ENCODE measurements at regions of chr17 and their contacts with region 1.

Region 1: GRCh38 chr17:38485146-38485468 is 56.8 kb downstream of the ARHGAP23 start:
- DNase-seq: no peak
- ATAC-seq: no peak

Region 2: GRCh38 chr17:38444151-38444550 is 41.0 kb before region 1 on chr17:
- intact Hi-C with region 1: loop called (anchors 5 kb)
- DNase-seq: no peak
- ATAC-seq: peak; percentile 91

Region 3: DNA sequence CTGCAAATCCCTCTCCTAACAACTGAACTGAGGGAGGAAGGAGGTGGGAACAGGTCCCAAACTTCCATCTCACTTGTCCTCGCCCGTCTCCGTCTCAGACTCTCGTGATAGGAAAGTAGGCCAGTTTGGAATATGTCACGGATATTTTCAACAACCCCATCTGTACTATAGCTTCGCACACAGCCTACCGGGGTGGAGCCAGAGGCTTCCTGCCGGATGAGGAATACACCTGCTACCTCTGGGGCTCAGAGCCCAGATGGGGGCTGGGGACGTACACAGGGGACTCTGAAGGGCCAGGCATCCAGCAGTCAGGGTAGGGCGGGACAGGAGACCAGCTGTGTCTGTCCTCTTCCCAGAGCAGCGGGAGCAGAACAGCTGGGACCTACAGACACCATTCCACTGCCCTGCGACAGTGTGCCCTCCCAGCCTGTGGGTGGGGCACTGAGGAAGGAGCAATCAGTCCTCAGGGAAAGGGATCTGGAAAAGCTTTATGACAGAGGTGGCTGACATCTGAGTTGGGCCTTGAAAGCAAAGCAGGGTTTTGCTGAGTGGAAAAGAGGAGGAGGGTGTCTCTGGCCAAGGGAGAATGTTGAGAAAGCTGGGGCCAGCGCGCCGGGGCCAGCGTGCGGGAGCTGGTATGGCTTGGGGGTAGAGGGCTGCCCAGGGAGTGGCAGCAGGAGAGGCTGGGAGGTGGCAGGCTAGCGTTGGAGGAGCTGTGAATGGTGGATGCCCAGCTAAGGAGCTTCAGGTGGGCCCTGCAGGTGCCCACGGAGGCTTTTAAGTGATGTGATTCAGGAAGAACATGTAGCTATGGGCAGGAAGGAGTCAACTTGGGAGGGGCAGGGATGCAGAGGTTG is 132.1 kb after region 1 on chr17:
- intact Hi-C with region 1: no loop called
- DNase-seq: no peak
- ATAC-seq: no peak